Activated CD8-positive, alpha-beta memory T cell treated with anti-CD3 and anti-CD28 coated beads, Interleukin-2, amount 10 ng/mL, durations not matched to agents 7 days and 5 days (primary cell): ENCODE measurements at regions of chr17 and their contacts with region 1.

Region 1: DNA sequence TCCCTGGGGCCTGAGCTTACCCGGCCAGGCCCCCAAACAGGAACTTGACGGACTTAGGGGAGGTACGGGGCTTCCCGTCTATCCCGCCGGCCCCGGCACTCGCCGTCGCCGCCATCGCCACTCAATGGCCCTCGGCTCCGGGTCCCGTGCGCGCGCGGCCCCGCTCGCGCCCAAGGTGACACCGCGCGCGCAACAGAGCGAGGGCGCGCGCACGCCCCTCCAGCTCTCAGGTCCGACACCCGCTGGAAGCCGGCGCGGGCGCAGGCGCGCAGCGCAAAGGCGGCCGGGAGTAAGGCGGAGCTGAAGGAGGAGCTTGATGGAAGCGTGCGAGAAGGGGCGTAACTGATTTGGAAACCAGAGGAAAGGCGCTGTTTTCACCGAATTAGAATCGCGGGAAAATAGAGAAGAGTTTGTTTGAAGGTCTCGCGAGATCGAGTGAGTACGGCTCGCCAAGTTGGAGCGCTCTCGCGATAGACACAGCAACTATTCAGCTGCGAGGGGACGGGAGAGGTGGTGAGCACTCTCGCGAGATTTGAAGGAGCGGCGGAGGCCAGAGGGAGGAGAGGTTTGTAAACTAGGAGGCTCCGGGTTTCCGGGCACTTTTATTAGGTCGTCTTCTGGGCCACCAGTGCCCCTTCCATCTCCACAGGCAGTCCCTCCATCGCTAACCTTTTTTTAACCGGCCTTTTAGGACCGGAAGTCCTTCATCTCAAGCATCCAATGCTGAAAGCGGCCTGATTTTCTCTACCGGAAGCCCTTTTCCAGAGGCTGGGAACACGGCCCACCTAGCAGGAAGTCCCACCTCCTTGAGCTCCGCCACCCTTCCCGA is at the starts of genes RNF167 and SLC25A11:
- DNase-seq: peak; percentile 99
- ATAC-seq: peak; percentile 84
- H3K4me3 Mint-ChIP-seq: peak within 1 kb of the TSS; percentile 98
- H3K27ac Mint-ChIP-seq: peak within 1 kb of the TSS; percentile 92
- H3K4me1 Mint-ChIP-seq: peaks cover 61% of the 10 kb centered on the region
- H3K27me3 Mint-ChIP-seq: no peaks in the 10 kb centered on the region
- total RNA-seq, gene RNF167: 226 to 273 TPM
- total RNA-seq, gene SLC25A11: 82.3 to 84.6 TPM

Region 2: DNA sequence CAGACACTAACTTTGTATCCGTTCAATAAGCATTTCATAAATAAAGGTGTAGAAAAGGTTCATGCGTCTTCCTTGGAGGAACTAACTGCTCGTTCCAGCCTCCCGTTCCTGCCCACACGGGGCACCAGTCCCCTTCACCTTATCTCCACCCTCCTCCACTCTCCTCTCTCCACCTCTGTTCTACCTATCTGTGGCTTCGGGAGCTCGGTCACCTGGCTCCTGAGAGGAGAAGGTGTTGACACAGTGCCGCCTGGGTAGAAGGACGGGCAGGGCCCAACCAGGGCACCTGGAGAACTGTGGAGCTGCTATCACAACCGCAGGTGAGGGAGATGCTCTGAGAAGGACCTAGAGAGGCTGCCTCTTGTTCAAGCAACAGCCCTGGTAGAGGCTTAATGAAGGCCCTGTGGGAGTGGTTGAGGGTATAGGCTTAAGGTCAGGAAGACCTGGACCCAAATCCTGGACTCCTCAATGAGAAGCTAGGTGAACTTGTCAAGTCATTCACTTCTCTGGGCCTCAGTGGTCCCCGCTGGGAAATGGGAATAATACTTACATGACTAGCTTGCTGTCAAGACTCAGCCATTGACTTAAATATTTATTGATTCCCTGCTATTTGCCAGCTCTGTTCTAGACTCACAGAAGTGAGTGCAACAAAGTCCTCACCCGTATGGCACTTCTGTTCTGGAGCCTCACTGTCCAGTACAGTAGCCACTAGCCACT is 116.5 kb before region 1 on chr17:
- CTCF ChIA-PET with region 1: no interaction called
- DNase-seq: no peak
- ATAC-seq: no peak
- H3K4me3 Mint-ChIP-seq: no peak overlapping the region
- H3K27ac Mint-ChIP-seq: no peak overlapping the region
- H3K4me1 Mint-ChIP-seq: no peaks in the 10 kb centered on the region
- H3K27me3 Mint-ChIP-seq: no peaks in the 10 kb centered on the region

Region 3: DNA sequence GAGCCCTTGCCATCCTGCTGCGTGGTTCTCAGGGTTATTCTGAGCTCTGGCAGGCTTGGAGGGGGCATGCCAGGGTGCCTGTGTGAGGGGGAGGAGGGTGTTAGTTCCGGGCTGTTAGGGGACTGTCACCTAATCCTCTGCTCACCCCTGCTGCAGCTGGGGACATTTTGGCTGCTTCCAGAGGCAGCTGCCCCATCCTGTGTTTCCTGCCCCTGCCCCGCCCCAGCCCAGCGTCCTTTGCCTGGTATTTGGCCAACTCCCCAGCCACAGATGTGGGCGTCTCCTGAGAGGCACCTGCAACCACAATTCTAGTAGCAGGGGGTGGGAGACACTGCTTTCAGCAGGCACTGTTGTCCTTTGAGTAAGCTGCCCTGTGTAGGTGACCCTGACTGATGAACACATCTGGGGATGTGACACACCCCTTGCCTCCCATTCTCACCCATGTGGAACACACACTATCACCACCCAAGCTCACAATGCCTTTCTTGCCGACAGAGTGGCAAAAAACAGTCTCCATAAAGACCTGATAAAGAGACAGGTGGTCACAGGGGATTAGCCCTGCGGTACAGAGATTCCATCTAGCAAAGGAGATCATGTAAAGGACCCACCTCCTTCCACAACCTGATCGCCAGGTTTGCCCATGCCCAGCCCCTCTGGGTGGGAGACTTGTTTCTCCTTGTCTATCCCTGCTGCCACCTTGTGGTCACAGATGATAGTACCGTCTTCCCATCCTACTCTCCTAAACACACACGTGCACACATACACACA is 36.8 kb before region 1 on chr17 and contains the start of gene CHRNE:
- CTCF ChIA-PET with region 1: interaction called, 24 read pairs
- DNase-seq: peak; percentile 87
- ATAC-seq: peak; percentile 32
- H3K4me3 Mint-ChIP-seq: peak within 1 kb of the TSS; percentile 10
- H3K27ac Mint-ChIP-seq: peak within 1 kb of the TSS; percentile 67
- H3K4me1 Mint-ChIP-seq: peaks cover 36% of the 10 kb centered on the region
- H3K27me3 Mint-ChIP-seq: peaks cover 4% of the 10 kb centered on the region
- total RNA-seq, gene CHRNE: 0.40 to 0.41 TPM

Region 4: DNA sequence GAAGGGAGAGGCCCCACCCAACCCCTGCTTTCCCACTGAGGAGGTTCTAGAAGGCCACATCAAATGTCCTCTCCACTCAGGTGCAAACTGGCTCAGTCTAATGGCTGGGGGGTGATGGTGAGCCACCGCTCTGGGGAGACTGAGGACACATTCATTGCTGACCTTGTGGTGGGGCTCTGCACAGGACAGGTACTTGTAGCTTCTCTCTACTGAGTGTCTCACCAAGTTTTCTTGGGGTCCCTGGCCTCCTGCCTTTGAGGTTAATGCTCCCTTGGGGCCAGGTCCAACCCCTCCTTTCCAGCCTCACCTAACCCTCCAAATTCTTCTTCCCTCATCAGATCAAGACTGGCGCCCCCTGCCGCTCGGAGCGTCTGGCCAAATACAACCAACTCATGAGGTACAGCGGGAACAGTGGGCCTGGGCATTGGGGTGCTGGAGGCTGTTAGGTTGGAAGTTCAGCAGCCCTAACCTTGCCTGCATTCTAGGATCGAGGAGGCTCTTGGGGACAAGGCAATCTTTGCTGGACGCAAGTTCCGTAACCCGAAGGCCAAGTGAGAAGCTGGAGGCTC is 16.6 kb after region 1 on chr17:
- CTCF ChIA-PET with region 1: interaction called, 10 read pairs
- DNase-seq: no peak
- ATAC-seq: no peak
- H3K4me3 Mint-ChIP-seq: no peak overlapping the region
- H3K27ac Mint-ChIP-seq: no peak overlapping the region
- H3K4me1 Mint-ChIP-seq: peaks cover under 1% of the 10 kb centered on the region
- H3K27me3 Mint-ChIP-seq: no peaks in the 10 kb centered on the region